Heart right ventricle (tissue), 16 donors: ENCODE measurements at regions of chr1 and their contacts with region 1.

Region 1: GRCh38 chr1:167627865-167628641 is 2.0 kb upstream of the RCSD1 start:
- DNase-seq: no peak
- ATAC-seq: peak in 6 of 8 donors; percentile 14 to 48 (median 24)
- H3K4me3 ChIP-seq: peak overlapping the region in 1 of 10 donors; percentile 87
- H3K27ac ChIP-seq: peak overlapping the region; percentile 29 to 99 (median 97)
- H3K4me1 ChIP-seq: peaks cover 14 to 58% (median 51%) of the 10 kb centered on the region in 9 donors
- H3K27me3 ChIP-seq: no peaks in the 10 kb centered on the region
- CTCF ChIP-seq: no peak

Region 2: GRCh38 chr1:167599957-167600581 is 28.0 kb before region 1 on chr1:
- intact Hi-C with region 1: loop called in 1 of 10 experiments (anchors 2 kb)
- DNase-seq: peak in 1 of 2 donors; percentile 51
- ATAC-seq: peak; percentile 73 to 89 (median 82)
- H3K4me3 ChIP-seq: peak overlapping the region in 1 of 10 donors; percentile 15
- H3K27ac ChIP-seq: peak overlapping the region in 7 of 10 donors; percentile 35 to 91 (median 58)
- H3K4me1 ChIP-seq: peaks cover 5 to 45% (median 33%) of the 10 kb centered on the region in 9 donors
- H3K27me3 ChIP-seq: no peaks in the 10 kb centered on the region
- CTCF ChIP-seq: peak; percentile 47 to 86 (median 72)

Region 3: DNA sequence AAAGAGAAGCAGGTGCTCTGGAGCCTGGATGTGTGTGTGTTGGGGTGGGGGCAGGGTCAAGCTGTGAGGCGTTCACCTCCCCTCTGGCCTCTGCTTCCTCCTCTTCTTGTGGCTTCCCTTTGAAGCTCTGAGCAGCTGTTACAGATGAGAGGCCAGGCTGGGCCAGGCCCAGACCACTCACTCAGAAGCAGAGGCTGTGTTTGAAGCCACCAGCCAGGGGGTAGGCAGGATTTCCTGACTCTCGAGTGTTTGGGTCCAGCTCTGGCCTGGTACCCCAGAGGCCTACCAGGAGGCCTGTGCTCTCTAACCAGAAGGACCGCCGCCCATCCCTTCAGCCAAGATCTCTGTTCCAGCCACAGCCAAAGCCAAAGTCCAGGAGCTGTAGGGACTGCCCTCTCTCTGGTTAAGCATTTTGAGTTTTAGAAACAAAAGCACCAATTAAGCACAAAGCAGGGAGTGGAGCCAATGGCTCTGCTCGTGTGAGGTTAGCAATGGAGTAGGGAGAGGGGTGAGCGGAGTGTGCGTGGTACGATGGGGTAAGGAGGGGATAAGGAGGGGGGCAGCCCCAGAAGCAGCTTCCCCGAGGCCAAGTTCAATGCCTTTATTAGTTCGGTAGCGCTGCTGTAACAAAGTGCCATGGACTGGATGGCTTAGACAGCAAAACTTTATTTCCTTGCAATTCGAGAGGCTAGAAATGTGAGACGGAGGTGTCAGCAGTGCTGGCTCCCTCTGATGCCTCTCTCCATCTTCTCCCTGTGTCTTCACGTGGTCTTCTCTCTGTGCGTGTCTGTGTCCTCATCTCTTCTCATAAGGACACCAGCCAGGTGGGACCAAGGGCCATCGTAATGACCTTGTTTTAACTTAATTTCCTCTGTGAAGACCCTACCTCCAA is 22.5 kb after region 1 on chr1:
- intact Hi-C with region 1: loop called in 1 of 10 experiments (anchors 2 kb)
- DNase-seq: peak in 1 of 2 donors; percentile 33
- ATAC-seq: peak in 7 of 8 donors; percentile 34 to 66 (median 50)
- H3K4me3 ChIP-seq: no peak overlapping the region
- H3K27ac ChIP-seq: peak overlapping the region; percentile 59 to 87 (median 74)
- H3K4me1 ChIP-seq: peaks cover 33 to 99% (median 90%) of the 10 kb centered on the region in 9 donors
- H3K27me3 ChIP-seq: no peaks in the 10 kb centered on the region
- CTCF ChIP-seq: no peak

Region 4: DNA sequence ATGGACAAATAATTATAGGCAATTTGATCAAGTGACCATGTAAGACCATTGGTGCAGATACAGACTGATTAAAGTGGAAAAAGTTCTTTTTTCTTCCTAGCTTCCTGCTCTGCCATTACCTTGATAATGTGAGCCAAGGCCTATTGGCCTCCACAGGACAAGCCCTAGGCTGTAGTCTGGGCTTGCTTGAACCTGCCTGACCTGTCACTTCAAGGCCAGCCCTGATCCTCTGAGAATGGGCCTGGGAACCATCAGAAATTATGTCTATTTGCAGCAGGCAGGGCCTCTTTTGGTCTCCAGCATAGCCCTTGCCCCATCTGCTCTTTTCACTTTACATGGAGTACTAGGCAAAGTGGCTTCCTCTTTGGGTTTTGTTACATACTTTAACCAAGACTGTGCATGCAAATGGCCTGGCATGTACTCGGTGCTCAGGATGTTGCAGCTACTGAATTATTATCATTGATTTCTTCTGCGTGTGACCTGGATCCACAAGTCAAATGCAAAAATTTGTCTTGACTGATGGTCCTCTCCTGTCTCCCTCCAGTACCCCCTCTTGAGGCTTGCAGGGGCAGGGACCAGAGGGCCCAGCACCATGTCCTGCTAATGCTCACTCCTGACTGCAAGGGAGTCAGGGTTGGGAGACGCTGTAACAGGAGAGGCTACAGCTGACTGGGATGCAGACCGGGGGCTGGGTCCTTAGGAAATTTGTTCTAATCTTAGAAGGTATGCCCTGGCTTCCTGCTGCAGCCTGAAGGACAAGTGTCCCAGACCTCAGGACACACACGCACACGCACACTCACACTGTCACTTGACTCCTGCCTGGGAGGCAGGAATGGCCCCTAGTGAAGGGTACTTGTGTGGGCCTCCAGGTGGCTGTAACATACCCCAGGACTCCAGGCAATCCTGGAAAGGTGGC is 41.4 kb after region 1 on chr1:
- intact Hi-C with region 1: loop called in 1 of 10 experiments (anchors 5 kb)
- DNase-seq: no peak
- ATAC-seq: peak; percentile 21 to 82 (median 50)
- H3K4me3 ChIP-seq: no peak overlapping the region
- H3K27ac ChIP-seq: peak overlapping the region in 7 of 10 donors; percentile 9 to 87 (median 49)
- H3K4me1 ChIP-seq: peaks cover 8 to 77% (median 71%) of the 10 kb centered on the region in 9 donors
- H3K27me3 ChIP-seq: no peaks in the 10 kb centered on the region
- CTCF ChIP-seq: no peak